Mammary epithelial cell (primary cell): ENCODE measurements at regions of chr15 and their contacts with region 1.

Region 1: GRCh38 chr15:48861813-48862431 is 16.0 kb upstream of the EID1 start:
- DNase-seq: peak; percentile 38
- H3K4me3 ChIP-seq: no peak overlapping the region
- H3K27ac ChIP-seq: no peak overlapping the region
- H3K4me1 ChIP-seq: peaks cover 18% of the 10 kb centered on the region
- H3K27me3 ChIP-seq: no peaks in the 10 kb centered on the region
- CTCF ChIP-seq: peak; percentile 86 to 89

Region 2: GRCh38 chr15:48541341-48542278 is 320.3 kb before region 1 on chr15:
- CTCF ChIA-PET with region 1: no interaction called
- dilution Hi-C with region 1: no loop called
- in situ Hi-C with region 1: no loop called
- intact Hi-C with region 1: no loop called
- DNase-seq: peak; percentile 48
- H3K4me3 ChIP-seq: no peak overlapping the region
- H3K27ac ChIP-seq: no peak overlapping the region
- H3K4me1 ChIP-seq: peaks cover 4% of the 10 kb centered on the region
- H3K27me3 ChIP-seq: no peaks in the 10 kb centered on the region
- CTCF ChIP-seq: no peak

Region 3: GRCh38 chr15:48914717-48915116 is 52.8 kb after region 1 on chr15:
- CTCF ChIA-PET with region 1: no interaction called
- dilution Hi-C with region 1: no loop called
- in situ Hi-C with region 1: no loop called
- intact Hi-C with region 1: no loop called
- DNase-seq: no peak
- H3K4me3 ChIP-seq: no peak overlapping the region
- H3K27ac ChIP-seq: no peak overlapping the region
- H3K4me1 ChIP-seq: peaks cover 5% of the 10 kb centered on the region
- H3K27me3 ChIP-seq: no peaks in the 10 kb centered on the region
- CTCF ChIP-seq: no peak

Region 4: GRCh38 chr15:48975472-48976419 is 113.8 kb after region 1 on chr15:
- CTCF ChIA-PET with region 1: interaction called, 23 read pairs
- dilution Hi-C with region 1: no loop called
- in situ Hi-C with region 1: no loop called
- intact Hi-C with region 1: no loop called
- DNase-seq: peak; percentile 72
- H3K4me3 ChIP-seq: peak overlapping the region; percentile 50 to 63 (median 59)
- H3K27ac ChIP-seq: no peak overlapping the region
- H3K4me1 ChIP-seq: peaks cover 5% of the 10 kb centered on the region
- H3K27me3 ChIP-seq: no peaks in the 10 kb centered on the region
- CTCF ChIP-seq: peak; percentile 68 to 75

Region 5: DNA sequence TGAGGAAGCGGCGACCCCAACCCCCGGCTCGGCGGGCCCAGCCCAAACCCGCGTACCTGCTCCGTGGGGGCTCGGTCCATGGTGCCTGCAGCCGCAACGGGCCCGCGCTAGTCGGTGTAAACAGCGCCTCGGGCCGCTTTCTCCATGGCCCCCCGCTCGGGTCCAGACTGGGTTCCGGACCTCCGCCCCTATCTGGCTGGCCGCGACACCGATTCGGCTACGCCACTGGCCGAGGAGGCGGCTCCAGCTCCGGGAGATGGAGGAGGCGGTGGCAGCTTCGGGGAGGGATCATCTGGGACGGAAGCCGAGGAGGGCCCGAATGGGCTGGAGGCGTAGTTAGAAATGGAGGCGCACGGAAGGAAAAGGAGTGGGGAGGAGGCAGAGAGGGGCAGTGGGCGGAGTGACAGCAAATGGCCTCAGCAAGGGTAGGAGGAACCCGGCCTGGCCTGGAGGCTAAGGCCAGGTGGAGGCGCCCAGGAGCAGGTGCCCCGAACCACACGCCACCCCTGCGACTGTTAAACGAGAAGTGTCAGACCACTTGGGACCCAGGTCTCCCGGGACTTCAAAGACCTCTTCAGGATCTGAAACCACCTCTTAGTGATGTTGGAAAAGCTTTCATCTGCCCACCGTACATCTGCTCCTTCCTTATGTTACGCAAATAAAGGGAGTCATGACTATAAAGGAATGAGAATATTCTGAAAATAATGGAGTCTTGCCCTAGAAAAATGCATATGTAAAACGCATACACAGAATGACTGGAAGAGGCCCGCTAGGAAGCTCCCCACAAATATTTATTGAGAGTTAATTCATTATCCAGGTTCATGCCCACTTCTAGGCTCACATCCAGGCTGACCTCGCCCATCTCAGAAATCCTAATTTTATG is 184.5 kb after region 1 on chr15 and contains the start of gene SECISBP2L:
- CTCF ChIA-PET with region 1: no interaction called
- dilution Hi-C with region 1: no loop called
- in situ Hi-C with region 1: no loop called
- intact Hi-C with region 1: loop called (anchors 1 kb)
- DNase-seq: peak; percentile 93
- H3K4me3 ChIP-seq: peak within 1 kb of the TSS; percentile 80 to 97 (median 82)
- H3K27ac ChIP-seq: peak within 1 kb of the TSS; percentile 61
- H3K4me1 ChIP-seq: peaks cover 2% of the 10 kb centered on the region
- H3K27me3 ChIP-seq: no peaks in the 10 kb centered on the region
- CTCF ChIP-seq: peak; percentile 4 to 27
- total RNA-seq, gene SECISBP2L: 26.2 to 30.3 TPM

Region 6: GRCh38 chr15:49145651-49146609 is 284.0 kb after region 1 on chr15:
- CTCF ChIA-PET with region 1: interaction called, 3 read pairs
- dilution Hi-C with region 1: loop called (anchors 25 kb)
- in situ Hi-C with region 1: loop called (anchors 10 to 25 kb)
- intact Hi-C with region 1: loop called (anchors 1 kb)
- DNase-seq: peak; percentile 52
- H3K4me3 ChIP-seq: peak overlapping the region in 1 of 3 experiments; percentile 17
- H3K27ac ChIP-seq: peak overlapping the region; percentile 15
- H3K4me1 ChIP-seq: no peaks in the 10 kb centered on the region
- H3K27me3 ChIP-seq: no peaks in the 10 kb centered on the region
- CTCF ChIP-seq: peak; percentile 69 to 79

Region 7: DNA sequence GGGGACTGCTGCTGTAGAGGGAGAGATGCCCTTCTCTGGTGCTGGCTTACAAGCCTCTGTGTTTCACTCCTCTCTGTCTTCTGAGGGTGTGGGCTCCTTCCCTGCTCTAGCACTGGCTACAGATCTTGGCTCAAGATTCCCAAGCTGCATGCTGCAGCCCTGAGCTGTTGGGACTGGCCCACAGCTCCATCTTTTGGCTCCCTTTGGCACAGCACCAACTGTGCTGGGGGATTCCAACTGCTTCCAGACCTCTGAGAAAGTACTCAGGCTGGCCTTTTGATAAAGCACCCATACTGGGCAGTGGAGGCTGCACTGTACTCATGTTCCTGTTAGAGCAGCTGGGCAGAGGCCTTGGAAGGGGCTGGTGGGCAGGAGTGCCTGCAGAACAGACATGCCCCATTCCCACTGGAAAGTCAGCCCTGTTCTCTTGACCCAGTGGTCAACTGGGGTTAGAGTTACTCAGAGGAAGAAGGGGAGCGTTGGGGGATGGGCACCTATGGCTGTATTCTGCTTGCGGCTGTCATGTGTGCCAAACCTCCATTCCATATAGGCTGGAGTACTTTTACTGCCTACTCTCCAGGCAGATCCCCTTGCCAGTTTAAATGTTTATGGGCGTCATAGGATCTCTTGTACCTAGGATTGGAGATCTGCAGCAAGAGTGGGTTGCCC is 363.8 kb after region 1 on chr15:
- CTCF ChIA-PET with region 1: no interaction called
- dilution Hi-C with region 1: no loop called
- in situ Hi-C with region 1: no loop called
- intact Hi-C with region 1: loop called (anchors 1 kb)
- DNase-seq: peak; percentile 46
- H3K4me3 ChIP-seq: no peak overlapping the region
- H3K27ac ChIP-seq: no peak overlapping the region
- H3K4me1 ChIP-seq: no peaks in the 10 kb centered on the region
- H3K27me3 ChIP-seq: no peaks in the 10 kb centered on the region
- CTCF ChIP-seq: peak; percentile 16 to 38

Region 8: GRCh38 chr15:49421991-49422390 is 560.1 kb after region 1 on chr15:
- CTCF ChIA-PET with region 1: no interaction called
- dilution Hi-C with region 1: no loop called
- in situ Hi-C with region 1: loop called in 1 of 2 experiments (anchors 25 kb)
- intact Hi-C with region 1: loop called (anchors 1 kb)
- DNase-seq: peak; percentile 55
- H3K4me3 ChIP-seq: peak overlapping the region in 1 of 3 experiments; percentile 33
- H3K27ac ChIP-seq: no peak overlapping the region
- H3K4me1 ChIP-seq: no peaks in the 10 kb centered on the region
- H3K27me3 ChIP-seq: peaks cover 3% of the 10 kb centered on the region
- CTCF ChIP-seq: peak; percentile 75 to 85